AG04450 (cell line): ENCODE measurements at regions of chr17 and their contacts with region 1.

Region 1: GRCh38 chr17:45640141-45640850 is 143.8 kb upstream of the CRHR1 start:
- DNase-seq: peak; percentile 43
- H3K4me3 ChIP-seq: no peak overlapping the region
- H3K27ac ChIP-seq: no peak overlapping the region
- H3K27me3 ChIP-seq: peaks cover 3% of the 10 kb centered on the region
- CTCF ChIP-seq: peak; percentile 99

Region 2: DNA sequence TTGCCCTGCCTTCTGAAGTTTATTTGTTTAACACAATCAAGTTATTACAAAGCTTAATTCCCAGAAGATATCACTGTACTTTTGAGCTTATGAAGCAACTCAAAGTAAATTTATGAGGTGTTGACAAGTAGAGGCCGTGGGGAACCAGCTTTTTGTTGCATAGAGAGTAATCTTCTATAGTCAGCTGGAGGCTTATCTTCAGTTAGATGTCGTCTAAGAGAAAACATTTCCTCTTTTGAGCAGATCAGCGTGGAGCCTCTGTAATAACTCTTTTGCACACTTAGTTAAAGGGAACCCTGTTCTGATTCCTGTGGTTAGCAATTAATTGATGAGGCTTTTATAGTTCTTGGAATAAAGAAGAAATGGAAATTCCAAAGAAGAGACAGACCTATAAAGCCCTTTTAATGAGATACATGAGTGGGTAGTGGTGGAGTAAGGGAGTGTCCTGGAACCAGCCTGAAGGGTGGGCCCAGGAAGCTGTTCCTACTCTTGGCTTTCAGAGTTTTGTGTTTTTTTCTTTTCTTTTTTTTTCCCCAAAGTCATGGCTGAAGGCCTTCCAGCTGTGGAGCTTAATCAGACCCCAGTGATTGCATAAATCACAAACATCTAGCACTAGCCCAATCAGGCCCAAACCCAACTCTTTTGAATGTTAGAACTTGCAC is 294.6 kb before region 1 on chr17:
- CTCF ChIA-PET with region 1: no interaction called
- POLR2A ChIA-PET with region 1: no interaction called
- DNase-seq: peak; percentile 55
- H3K4me3 ChIP-seq: no peak overlapping the region
- H3K27ac ChIP-seq: peak overlapping the region; percentile 75
- H3K27me3 ChIP-seq: no peaks in the 10 kb centered on the region
- CTCF ChIP-seq: no peak

Region 3: GRCh38 chr17:45584092-45585036 is 55.9 kb before region 1 on chr17:
- CTCF ChIA-PET with region 1: no interaction called
- POLR2A ChIA-PET with region 1: interaction called, 12 read pairs
- DNase-seq: no peak
- H3K4me3 ChIP-seq: peak overlapping the region; percentile 96
- H3K27ac ChIP-seq: peak overlapping the region; percentile 75
- H3K27me3 ChIP-seq: no peaks in the 10 kb centered on the region
- CTCF ChIP-seq: no peak

Region 4: GRCh38 chr17:45666046-45666600 is 25.8 kb after region 1 on chr17:
- CTCF ChIA-PET with region 1: no interaction called
- POLR2A ChIA-PET with region 1: no interaction called
- DNase-seq: no peak
- H3K4me3 ChIP-seq: no peak overlapping the region
- H3K27ac ChIP-seq: no peak overlapping the region
- H3K27me3 ChIP-seq: peaks cover 4% of the 10 kb centered on the region
- CTCF ChIP-seq: no peak

Region 5: DNA sequence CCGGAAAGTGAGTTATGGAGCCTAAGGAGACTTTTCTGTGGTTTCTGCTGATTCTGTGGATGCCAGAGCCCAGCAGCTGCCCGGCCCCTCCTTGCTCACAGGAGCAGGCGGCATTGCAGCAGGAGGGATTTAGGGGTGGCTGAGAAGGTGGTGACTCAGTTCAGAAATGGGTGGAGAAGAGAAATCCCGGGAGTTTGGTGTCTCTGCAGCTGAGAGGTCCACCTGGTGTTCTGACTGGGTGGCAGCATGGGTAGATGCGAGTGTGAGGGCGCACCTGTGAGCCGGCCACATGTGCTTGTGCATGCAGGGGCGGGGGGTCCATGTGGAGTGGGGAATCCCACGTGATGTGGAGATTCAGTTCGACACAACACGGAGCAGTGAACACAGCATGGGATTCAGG is 188.3 kb after region 1 on chr17:
- CTCF ChIA-PET with region 1: interaction called, 71 read pairs
- POLR2A ChIA-PET with region 1: no interaction called
- DNase-seq: no peak
- H3K4me3 ChIP-seq: no peak overlapping the region
- H3K27ac ChIP-seq: no peak overlapping the region
- H3K27me3 ChIP-seq: peaks cover 2% of the 10 kb centered on the region
- CTCF ChIP-seq: no peak

Region 6: DNA sequence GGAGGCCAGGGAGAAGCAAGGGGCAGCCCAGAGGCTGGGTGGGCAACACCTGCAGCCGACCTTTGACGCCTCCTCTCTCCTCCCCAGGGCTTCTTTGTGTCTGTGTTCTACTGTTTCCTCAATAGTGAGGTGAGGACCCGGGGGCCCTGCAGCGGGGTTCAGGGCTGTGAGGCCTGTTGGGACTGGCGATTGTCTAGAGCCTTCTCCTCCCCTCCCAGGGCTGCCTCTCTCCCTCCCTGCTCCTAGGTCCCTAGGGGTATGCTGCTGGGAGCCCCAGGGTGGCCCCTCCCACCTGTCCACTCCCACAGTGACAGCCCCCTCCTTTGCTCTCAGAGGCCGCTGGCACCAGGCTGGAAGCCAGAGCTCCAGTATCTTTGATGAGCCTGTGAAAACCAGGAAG is 193.6 kb after region 1 on chr17:
- CTCF ChIA-PET with region 1: interaction called, 71 read pairs
- POLR2A ChIA-PET with region 1: no interaction called
- DNase-seq: no peak
- H3K4me3 ChIP-seq: no peak overlapping the region
- H3K27ac ChIP-seq: no peak overlapping the region
- H3K27me3 ChIP-seq: peaks cover 6% of the 10 kb centered on the region
- CTCF ChIP-seq: no peak

Region 7: DNA sequence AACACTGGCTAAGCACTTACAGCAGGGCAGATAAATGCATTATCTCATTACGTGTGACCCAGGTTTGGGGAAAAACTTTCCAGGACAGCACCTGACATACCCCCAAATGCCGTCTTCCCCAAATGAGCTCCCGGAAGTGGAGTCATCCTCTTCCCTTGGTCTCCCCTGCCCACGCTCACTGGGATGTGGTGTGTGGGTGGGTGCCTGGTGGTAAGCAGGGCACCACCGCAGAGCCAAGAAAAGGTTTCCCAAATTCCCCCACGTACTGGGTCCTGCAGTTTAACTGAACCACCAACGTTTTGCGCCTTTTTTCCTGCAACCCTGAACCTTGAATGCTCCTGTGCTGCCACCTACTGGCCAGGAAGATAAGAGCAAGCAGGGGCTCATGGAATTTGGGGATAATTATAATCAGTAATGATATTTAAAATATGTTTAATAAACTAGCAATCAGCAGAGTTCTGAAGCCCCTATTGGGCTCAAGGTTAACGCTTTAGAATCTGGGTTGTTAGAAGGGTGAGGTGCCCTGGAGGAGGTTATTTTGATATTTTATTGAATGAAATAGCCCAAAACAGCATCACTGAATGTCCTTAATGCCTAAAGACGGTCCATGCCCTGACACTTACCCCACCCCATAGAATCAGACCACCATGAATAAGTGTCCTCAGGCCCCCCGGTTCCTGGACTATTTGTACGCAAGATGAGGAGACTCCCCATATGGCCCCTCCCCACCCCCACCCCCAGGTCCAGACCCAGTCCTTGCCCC is 212.4 kb after region 1 on chr17:
- CTCF ChIA-PET with region 1: interaction called, 23 read pairs
- POLR2A ChIA-PET with region 1: interaction called, 3 read pairs
- DNase-seq: peak; percentile 23
- H3K4me3 ChIP-seq: no peak overlapping the region
- H3K27ac ChIP-seq: no peak overlapping the region
- H3K27me3 ChIP-seq: peaks cover 10% of the 10 kb centered on the region
- CTCF ChIP-seq: peak; percentile 89